Activated naive CD4-positive, alpha-beta T cell treated with anti-CD3 and anti-CD28 coated beads for 36 hours (primary cell): ENCODE measurements at regions of chr1 and their contacts with region 1.

Region 1: DNA sequence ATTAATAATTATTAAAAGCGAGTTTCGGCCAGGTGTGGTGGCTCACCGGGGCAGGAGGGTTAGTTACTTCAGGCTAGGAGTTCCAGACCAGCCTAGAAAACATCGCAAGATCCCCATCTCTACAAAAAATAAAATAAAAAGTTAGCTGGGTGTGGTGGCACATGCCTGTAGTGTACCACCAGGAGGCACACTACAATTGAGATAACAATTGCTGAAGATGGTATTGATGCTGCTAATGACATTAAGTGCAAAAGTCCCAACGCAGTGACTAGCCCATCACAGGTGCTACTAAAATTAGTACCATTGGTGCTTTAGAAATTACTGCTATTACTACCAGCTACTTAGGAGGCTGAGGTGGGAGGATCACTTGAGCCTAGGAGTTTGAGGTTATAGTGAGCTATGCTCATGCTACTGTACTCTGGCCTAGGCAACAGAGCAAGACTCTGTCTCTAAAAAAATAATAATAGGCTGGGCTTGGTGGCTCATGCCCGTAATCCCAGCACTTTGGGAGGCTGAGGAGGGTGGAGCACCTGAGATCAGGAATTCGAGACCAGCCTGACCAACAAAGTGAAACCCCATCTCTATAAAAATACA is 156.6 kb downstream of the GREM2 start:
- DNase-seq: peak; percentile 10
- H3K4me3 Mint-ChIP-seq: no peak overlapping the region
- H3K27ac Mint-ChIP-seq: no peak overlapping the region
- H3K4me1 Mint-ChIP-seq: no peaks in the 10 kb centered on the region
- H3K27me3 Mint-ChIP-seq: no peaks in the 10 kb centered on the region

Region 2: DNA sequence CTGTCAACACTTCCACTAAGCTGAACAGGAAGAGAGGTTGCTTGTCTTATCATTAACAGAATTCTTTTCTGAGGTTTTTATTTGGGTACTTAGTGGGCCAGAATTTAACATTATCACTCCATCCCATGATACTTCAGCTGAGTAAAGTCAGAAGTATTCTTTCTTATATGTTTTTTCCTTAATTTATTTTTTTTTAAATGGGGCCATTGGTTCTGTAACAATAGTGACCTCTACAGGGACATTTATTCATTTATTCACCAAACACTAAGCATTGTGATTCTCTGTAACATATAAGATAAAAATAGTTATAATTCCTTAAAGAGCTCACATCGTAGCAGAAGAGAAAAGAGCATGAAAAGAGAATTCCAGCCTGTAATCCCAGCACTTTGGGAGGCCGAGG is 146.9 kb after region 1 on chr1:
- CTCF ChIA-PET with region 1: no interaction called
- intact Hi-C with region 1: loop called (anchors 1 kb)
- DNase-seq: no peak
- H3K4me3 Mint-ChIP-seq: no peak overlapping the region
- H3K27ac Mint-ChIP-seq: no peak overlapping the region
- H3K4me1 Mint-ChIP-seq: no peaks in the 10 kb centered on the region
- H3K27me3 Mint-ChIP-seq: no peaks in the 10 kb centered on the region

Region 3: DNA sequence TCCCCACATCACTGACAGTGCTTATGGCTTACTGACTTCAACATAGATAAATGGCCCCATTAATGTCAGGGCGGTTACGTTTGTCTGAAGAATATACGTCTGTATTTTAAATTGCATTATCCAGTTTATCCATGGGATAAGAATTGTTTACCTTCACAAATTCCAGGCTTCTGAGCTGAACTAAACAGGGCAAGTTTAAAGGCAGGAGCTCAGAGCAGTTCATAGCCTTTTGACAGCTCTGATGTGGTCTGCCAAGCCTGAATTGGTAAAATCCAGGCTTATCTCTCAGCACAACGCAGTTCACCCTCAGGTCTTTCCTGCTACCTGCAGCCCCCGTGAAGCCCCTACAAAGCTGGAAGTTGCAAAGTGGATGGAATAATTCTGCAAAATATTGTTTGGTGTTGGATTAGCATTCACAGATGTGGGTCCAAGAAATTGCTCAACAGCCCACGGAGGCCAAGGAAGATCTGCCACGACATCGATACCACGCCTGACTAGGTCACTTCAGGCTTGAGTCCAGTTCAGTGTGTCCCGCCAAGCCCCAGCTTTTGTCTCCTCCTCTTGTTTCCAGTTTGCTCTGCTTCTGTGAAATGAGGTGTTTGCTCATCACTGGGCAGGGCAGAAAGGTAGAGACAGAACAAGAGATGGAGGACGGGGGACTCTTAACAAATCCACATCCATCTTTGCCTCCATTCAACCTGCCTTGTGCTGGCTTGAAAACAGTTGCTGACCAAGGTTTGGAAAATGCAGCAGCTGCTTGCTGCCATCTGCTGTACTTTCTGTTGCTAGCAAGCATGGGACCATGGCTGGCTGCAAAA is 236.4 kb after region 1 on chr1:
- CTCF ChIA-PET with region 1: interaction called, 4 read pairs
- intact Hi-C with region 1: loop called (anchors 1 kb)
- DNase-seq: peak; percentile 30
- H3K4me3 Mint-ChIP-seq: no peak overlapping the region
- H3K27ac Mint-ChIP-seq: no peak overlapping the region
- H3K4me1 Mint-ChIP-seq: peaks cover 9% of the 10 kb centered on the region
- H3K27me3 Mint-ChIP-seq: no peaks in the 10 kb centered on the region

Region 4: DNA sequence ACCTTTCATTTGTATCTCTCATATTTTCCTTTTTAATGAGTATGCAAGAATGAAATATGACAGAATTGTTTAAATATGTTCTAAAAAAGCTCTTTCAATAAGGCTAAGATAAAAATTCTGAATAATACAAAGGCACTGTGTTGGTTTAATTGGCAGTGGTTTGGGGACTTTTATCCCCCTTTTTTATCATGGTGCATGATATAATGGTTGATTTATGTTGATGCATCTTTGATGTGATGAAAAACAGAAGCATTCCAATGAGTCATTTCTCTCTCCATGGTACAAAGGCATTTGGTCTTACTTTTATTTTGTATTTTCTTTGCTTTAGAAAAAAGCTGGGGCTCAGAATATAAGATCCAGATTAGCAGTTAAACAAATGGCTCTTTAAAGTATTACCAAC is 283.8 kb after region 1 on chr1:
- CTCF ChIA-PET with region 1: no interaction called
- intact Hi-C with region 1: no loop called
- DNase-seq: no peak
- H3K4me3 Mint-ChIP-seq: no peak overlapping the region
- H3K27ac Mint-ChIP-seq: no peak overlapping the region
- H3K4me1 Mint-ChIP-seq: no peaks in the 10 kb centered on the region
- H3K27me3 Mint-ChIP-seq: no peaks in the 10 kb centered on the region